Breast epithelium (tissue), 4 donors: ENCODE measurements at regions of chr6 and their contacts with region 1.

Region 1: GRCh38 chr6:87483929-87484328 is 11.2 kb downstream of the SLC35A1 start:
- DNase-seq: no peak
- H3K4me3 ChIP-seq: no peak overlapping the region
- H3K27ac ChIP-seq: no peak overlapping the region
- H3K4me1 ChIP-seq: no peaks in the 10 kb centered on the region
- H3K27me3 ChIP-seq: no peaks in the 10 kb centered on the region
- CTCF ChIP-seq: no peak
- POLR2A ChIP-seq: no peak

Region 2: GRCh38 chr6:87088076-87088475 is 395.9 kb before region 1 on chr6:
- intact Hi-C with region 1: loop called (anchors 5 kb)
- DNase-seq: no peak
- H3K4me3 ChIP-seq: no peak overlapping the region
- H3K27ac ChIP-seq: no peak overlapping the region
- H3K4me1 ChIP-seq: no peaks in the 10 kb centered on the region
- H3K27me3 ChIP-seq: no peaks in the 10 kb centered on the region
- CTCF ChIP-seq: no peak
- POLR2A ChIP-seq: no peak

Region 3: GRCh38 chr6:87436435-87436834 is 47.5 kb before region 1 on chr6:
- intact Hi-C with region 1: no loop called
- DNase-seq: no peak
- H3K4me3 ChIP-seq: no peak overlapping the region
- H3K27ac ChIP-seq: no peak overlapping the region
- H3K4me1 ChIP-seq: no peaks in the 10 kb centered on the region
- H3K27me3 ChIP-seq: no peaks in the 10 kb centered on the region
- CTCF ChIP-seq: no peak
- POLR2A ChIP-seq: no peak

Region 4: GRCh38 chr6:87514831-87515230 is 30.9 kb after region 1 on chr6:
- intact Hi-C with region 1: no loop called
- DNase-seq: no peak
- H3K4me3 ChIP-seq: no peak overlapping the region
- H3K27ac ChIP-seq: no peak overlapping the region
- H3K4me1 ChIP-seq: no peaks in the 10 kb centered on the region
- H3K27me3 ChIP-seq: no peaks in the 10 kb centered on the region
- CTCF ChIP-seq: no peak
- POLR2A ChIP-seq: no peak